Activated CD4-positive, alpha-beta memory T cell treated with anti-CD3 and anti-CD28 coated beads for 36 hours (primary cell): ENCODE measurements at regions of chr2 and their contacts with region 1.

Region 1: GRCh38 chr2:69724540-69725159 is 17.3 kb upstream of the ANXA4 start:
- DNase-seq: peak; percentile 91
- H3K4me3 Mint-ChIP-seq: peak overlapping the region; percentile 48
- H3K27ac Mint-ChIP-seq: no peak overlapping the region
- H3K4me1 Mint-ChIP-seq: peaks cover 4% of the 10 kb centered on the region
- H3K27me3 Mint-ChIP-seq: no peaks in the 10 kb centered on the region

Region 2: DNA sequence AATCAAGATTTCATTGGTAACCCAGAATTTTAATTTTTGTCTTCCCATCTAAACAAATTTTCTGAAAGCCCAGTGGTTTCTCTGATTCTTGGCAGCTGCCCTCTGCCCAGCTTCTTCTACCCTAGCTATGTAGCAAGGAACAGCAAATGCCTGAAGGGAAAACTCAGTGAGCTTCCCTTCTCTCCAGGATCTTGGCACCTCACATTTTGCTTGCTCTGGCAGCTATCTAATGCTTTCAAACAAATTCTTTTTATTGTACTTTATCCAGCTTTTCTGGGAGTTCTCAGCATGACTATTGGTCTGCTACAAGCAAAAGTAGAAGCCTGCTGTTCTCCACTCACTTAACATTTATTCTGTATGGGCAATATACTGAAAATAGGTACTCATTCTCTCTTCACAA is 319.3 kb before region 1 on chr2:
- CTCF ChIA-PET with region 1: no interaction called
- POLR2A ChIA-PET with region 1: no interaction called
- intact Hi-C with region 1: no loop called
- DNase-seq: no peak
- H3K4me3 Mint-ChIP-seq: no peak overlapping the region
- H3K27ac Mint-ChIP-seq: no peak overlapping the region
- H3K4me1 Mint-ChIP-seq: peaks cover 4% of the 10 kb centered on the region
- H3K27me3 Mint-ChIP-seq: no peaks in the 10 kb centered on the region

Region 3: GRCh38 chr2:69559442-69560146 is 165.1 kb before region 1 on chr2:
- CTCF ChIA-PET with region 1: interaction called, 33 read pairs
- POLR2A ChIA-PET with region 1: no interaction called
- intact Hi-C with region 1: no loop called
- DNase-seq: no peak
- H3K4me3 Mint-ChIP-seq: no peak overlapping the region
- H3K27ac Mint-ChIP-seq: no peak overlapping the region
- H3K4me1 Mint-ChIP-seq: peaks cover 77% of the 10 kb centered on the region
- H3K27me3 Mint-ChIP-seq: no peaks in the 10 kb centered on the region

Region 4: DNA sequence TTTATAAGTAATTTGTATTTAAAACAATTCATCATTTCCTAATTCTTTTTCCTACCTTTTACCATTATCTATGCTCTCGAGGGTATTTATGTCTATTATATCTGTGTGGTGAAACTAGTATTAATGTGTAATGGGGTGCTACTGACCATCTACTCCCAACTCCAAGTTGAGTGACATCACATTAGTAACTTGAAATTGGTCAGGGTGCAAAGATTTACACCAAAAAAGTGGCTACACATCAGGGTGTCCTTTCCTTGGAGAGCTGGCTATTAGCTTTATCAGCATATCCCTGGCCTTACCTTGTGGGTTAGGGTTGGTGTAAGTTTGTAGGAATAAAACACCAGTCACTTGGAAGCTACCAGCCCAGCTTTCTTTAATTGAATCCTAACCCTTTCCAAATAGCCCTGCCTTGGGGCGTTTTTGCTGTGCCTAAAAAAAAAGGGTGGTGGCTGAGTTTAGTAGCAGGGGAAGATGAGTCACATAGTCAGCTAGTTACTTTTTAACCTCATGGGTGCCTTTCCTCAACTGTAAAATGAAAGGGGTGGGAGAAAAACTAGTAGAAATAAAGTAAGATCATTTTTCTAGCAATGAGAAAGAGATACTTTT is 31.3 kb after region 1 on chr2:
- CTCF ChIA-PET with region 1: interaction called, 15 read pairs
- POLR2A ChIA-PET with region 1: no interaction called
- intact Hi-C with region 1: no loop called
- DNase-seq: peak; percentile 17
- H3K4me3 Mint-ChIP-seq: no peak overlapping the region
- H3K27ac Mint-ChIP-seq: no peak overlapping the region
- H3K4me1 Mint-ChIP-seq: peaks cover 17% of the 10 kb centered on the region
- H3K27me3 Mint-ChIP-seq: no peaks in the 10 kb centered on the region

Region 5: DNA sequence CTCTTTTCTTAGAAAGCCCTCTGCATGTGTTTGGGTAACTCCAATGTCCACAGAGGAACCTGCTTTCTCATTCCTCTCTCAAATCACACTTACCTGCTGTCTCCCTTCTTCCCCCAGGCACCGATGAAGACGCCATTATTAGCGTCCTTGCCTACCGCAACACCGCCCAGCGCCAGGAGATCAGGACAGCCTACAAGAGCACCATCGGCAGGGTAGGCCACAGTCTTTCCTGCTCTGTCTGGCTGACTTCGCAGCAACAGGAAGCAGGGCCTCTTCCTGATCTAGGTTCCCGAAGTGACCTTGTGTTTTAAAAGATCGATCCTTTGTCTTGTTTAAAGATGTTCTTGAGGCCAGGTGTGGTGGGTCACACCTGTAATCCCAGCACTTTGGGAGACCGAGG is 79.8 kb after region 1 on chr2:
- CTCF ChIA-PET with region 1: interaction called, 17 read pairs
- POLR2A ChIA-PET with region 1: no interaction called
- intact Hi-C with region 1: no loop called
- DNase-seq: peak; percentile 11
- H3K4me3 Mint-ChIP-seq: no peak overlapping the region
- H3K27ac Mint-ChIP-seq: no peak overlapping the region
- H3K4me1 Mint-ChIP-seq: peaks cover 13% of the 10 kb centered on the region
- H3K27me3 Mint-ChIP-seq: no peaks in the 10 kb centered on the region

Region 6: DNA sequence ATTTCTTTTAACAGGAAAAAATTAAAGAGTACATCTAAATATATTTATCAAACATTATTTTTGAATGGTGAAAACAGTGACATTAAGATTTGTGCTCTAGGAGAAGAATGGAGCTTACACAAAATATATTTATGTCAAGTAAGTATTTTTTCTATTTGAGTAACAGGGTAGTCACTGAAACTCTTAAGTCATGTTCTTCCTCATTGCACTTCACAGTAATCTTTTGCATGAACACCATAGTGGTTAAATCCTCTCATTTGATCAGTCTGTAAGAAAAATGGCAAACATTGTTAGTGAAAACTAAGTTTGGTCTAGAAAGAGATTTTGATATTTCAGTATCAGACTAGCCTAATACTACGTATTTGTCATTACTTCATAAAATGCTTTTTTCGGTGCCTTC is 112.9 kb after region 1 on chr2:
- CTCF ChIA-PET with region 1: interaction called, 10 read pairs
- POLR2A ChIA-PET with region 1: no interaction called
- intact Hi-C with region 1: no loop called
- DNase-seq: no peak
- H3K4me3 Mint-ChIP-seq: no peak overlapping the region
- H3K27ac Mint-ChIP-seq: no peak overlapping the region
- H3K4me1 Mint-ChIP-seq: peaks cover 42% of the 10 kb centered on the region
- H3K27me3 Mint-ChIP-seq: no peaks in the 10 kb centered on the region

Region 7: GRCh38 chr2:70070541-70071268 is 346.1 kb after region 1 on chr2:
- CTCF ChIA-PET with region 1: interaction called, 5 read pairs
- POLR2A ChIA-PET with region 1: no interaction called
- intact Hi-C with region 1: loop called (anchors 10 kb)
- DNase-seq: peak; percentile 72
- H3K4me3 Mint-ChIP-seq: peak overlapping the region; percentile 35
- H3K27ac Mint-ChIP-seq: peak overlapping the region; percentile 98
- H3K4me1 Mint-ChIP-seq: peaks cover 46% of the 10 kb centered on the region
- H3K27me3 Mint-ChIP-seq: no peaks in the 10 kb centered on the region